HEK293T (cell line): ENCODE measurements at regions of chr2 and their contacts with region 1.

Region 1: GRCh38 chr2:242022550-242023290 is 153.2 kb downstream of the RTP5 start:
- DNase-seq: no peak

Region 2: DNA sequence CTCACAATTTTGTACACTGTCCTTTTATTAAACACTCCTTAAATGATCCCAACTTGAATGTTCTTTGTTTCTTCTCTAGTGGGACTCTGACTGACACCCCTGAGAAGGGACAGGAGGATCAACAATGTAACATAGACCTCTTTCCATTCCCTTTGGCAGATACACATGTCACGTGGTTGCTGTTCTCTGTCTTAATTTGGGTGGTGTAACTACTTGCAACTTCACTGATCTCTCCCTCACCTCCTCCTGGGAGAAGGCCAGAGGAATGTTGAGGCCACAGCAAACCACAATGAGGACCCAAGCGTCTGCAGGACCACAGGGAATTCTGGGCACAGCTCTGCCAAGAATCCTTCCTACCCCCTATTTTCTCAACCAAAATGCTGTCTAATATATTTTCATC is 52.4 kb after region 1 on chr2:
- CTCF ChIA-PET with region 1: interaction called, 12 read pairs
- POLR2A ChIA-PET with region 1: no interaction called
- DNase-seq: no peak